ENCODE measurements at regions of chr4 and their contacts with region 1.

Region 1: DNA sequence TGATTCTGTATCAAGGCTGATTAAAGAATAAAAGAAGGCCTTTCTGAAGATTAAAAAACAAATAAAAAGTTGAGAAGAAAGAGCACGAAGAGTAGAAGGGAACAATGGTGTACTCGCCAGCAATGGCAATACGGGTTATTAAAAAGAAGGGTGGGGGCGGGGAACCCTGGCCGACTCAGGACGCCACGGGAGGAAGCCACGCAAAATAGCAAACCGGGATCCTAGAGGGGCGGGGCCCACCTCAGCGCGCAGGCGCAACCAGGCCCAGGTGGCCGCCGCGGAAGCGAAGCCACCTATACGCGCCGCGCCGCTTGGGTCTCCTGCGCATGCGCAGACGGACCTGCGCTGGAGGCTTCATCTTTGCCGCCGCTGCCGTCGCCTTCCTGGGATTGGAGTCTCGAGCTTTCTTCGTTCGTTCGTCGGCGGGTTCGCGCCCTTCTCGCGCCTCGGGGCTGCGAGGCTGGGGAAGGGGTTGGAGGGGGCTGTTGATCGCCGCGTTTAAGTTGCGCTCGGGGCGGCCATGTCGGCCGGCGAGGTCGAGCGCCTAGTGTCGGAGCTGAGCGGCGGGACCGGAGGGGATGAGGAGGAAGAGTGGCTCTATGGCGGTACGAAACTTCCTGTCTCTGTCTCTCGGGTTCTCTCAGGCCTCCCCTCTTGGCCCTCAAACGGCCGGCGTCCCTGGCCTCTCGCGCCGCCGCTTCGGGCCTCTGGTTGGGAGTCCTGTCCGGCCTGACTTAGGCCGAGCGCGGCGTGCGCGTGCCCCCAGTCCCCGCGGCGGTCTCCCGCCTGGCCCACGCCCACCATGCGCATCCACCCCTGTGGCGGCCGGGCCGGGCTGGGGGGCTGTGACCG is at the start of gene FIP1L1:
- DNase-seq: peak; percentile 71 to 94
- H3K4me3 ChIP-seq: peak within 1 kb of the TSS; percentile 82
- H3K27ac ChIP-seq: peak within 1 kb of the TSS; percentile 42; the same call in 1 of the 2 replicates
- H3K4me1 ChIP-seq: peaks cover 14% of the 10 kb centered on the region
- H3K27me3 ChIP-seq: no peaks in the 10 kb centered on the region
- CTCF ChIP-seq: no peak
- total RNA-seq, gene FIP1L1: 44.8 and 65.6 TPM in 2 replicates

Region 2: GRCh38 chr4:53103481-53103880 is 274.1 kb before region 1 on chr4:
- CTCF ChIA-PET with region 1: no interaction called
- POLR2A ChIA-PET with region 1: no interaction called
- intact Hi-C with region 1: no loop called
- DNase-seq: no peak
- H3K4me3 ChIP-seq: no peak overlapping the region
- H3K27ac ChIP-seq: no peak overlapping the region
- H3K4me1 ChIP-seq: no peaks in the 10 kb centered on the region
- H3K27me3 ChIP-seq: no peaks in the 10 kb centered on the region
- CTCF ChIP-seq: no peak

Region 3: GRCh38 chr4:53365486-53366300 is 11.9 kb before region 1 on chr4 and contains the start of gene SCFD2:
- CTCF ChIA-PET with region 1: no interaction called
- POLR2A ChIA-PET with region 1: interaction called, 6 read pairs
- intact Hi-C with region 1: loop called (anchors 1 kb)
- DNase-seq: peak; percentile 90 to 91
- H3K4me3 ChIP-seq: peak within 1 kb of the TSS; percentile 72
- H3K27ac ChIP-seq: no peak within 1 kb of the TSS
- H3K4me1 ChIP-seq: peaks cover 18% of the 10 kb centered on the region; the same call in 1 of the 2 replicates
- H3K27me3 ChIP-seq: 0 out of 2 replicates have a peak, but pooled peaks cover 5% of the 10 kb centered on the region
- CTCF ChIP-seq: no peak
- total RNA-seq, gene SCFD2: 7.0 and 8.1 TPM in 2 replicates

Region 4: GRCh38 chr4:53444954-53445353 is 67.4 kb after region 1 on chr4:
- CTCF ChIA-PET with region 1: no interaction called
- POLR2A ChIA-PET with region 1: no interaction called
- intact Hi-C with region 1: loop called (anchors 10 kb)
- DNase-seq: no peak
- H3K4me3 ChIP-seq: no peak overlapping the region
- H3K27ac ChIP-seq: no peak overlapping the region
- H3K4me1 ChIP-seq: no peaks in the 10 kb centered on the region
- H3K27me3 ChIP-seq: no peaks in the 10 kb centered on the region
- CTCF ChIP-seq: no peak